ENCODE measurements at regions of chr2 and their contacts with region 1.

Region 1: DNA sequence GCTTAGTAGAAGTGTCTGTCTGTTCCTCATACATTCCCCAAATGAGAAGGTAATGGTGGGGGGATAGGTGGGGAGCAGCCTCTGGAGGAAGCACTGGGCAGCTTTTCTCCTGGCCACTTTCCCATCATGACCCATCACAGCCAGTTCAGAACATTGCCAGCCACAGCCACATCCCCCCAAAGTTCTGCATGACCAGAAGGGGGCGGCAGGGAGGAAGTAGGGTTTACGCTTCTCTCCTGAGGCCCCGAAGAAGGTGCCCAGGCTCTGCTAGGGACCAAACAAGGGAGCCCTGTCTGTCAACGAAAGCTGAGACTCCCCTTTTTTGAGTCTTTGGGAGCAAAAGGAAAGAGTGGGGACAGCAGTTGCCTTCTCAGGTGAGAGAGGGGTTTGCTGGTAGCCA is 7.7 kb downstream of the IGFBP5 start:
- DNase-seq: no peak
- ATAC-seq: no peak
- H3K4me3 ChIP-seq: no peak overlapping the region
- H3K27ac ChIP-seq: no peak overlapping the region
- H3K4me1 ChIP-seq: peaks cover 0 to 4% (median 3%) of the 10 kb centered on the region in 3 donors
- H3K27me3 ChIP-seq: peaks cover 0 to 22% (median 0%) of the 10 kb centered on the region in 4 donors
- CTCF ChIP-seq: peak in 1 of 4 donors; percentile 7

Region 2: GRCh38 chr2:217166241-217166850 is 478.7 kb after region 1 on chr2:
- intact Hi-C with region 1: loop called in 1 of 3 experiments (anchors 10 kb)
- DNase-seq: no peak
- ATAC-seq: peak in 3 of 4 donors; percentile 50 to 63 (median 54)
- H3K4me3 ChIP-seq: no peak overlapping the region
- H3K27ac ChIP-seq: no peak overlapping the region
- H3K4me1 ChIP-seq: no peaks in the 10 kb centered on the region
- H3K27me3 ChIP-seq: no peaks in the 10 kb centered on the region
- CTCF ChIP-seq: peak in 2 of 4 donors; percentile 14 to 16

Region 3: DNA sequence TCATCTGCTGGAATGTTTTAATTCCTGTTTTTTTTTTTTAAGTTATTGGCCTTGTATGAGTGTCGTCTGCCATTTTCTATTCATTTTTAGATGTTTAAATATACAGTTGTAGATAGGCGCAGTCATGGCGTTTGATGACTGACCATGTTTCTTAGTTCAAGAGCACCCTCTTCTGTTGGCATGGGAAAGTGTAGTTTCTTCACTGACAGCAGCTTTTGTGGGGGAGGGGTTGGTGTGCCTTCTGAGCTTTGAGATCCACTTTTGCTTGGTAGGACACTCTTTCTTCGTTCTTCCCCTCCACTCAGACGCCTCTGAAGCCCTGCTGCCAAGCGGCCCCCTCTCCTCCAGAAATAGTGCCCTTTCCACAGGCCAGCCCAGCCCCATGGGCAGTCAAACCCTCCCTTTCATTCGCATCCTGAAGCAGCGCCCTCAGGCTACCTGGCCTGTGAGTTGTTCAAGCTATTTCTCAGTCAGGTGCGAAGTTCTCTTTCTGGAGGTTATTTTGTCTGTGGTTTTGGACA is 823.2 kb after region 1 on chr2:
- intact Hi-C with region 1: loop called in 2 of 3 experiments (anchors 5 to 10 kb)
- DNase-seq: peak in 3 of 6 donors; percentile 29 to 59 (median 38)
- ATAC-seq: peak; percentile 61 to 95 (median 92)
- H3K4me3 ChIP-seq: no peak overlapping the region
- H3K27ac ChIP-seq: no peak overlapping the region
- H3K4me1 ChIP-seq: no peaks in the 10 kb centered on the region
- H3K27me3 ChIP-seq: no peaks in the 10 kb centered on the region
- CTCF ChIP-seq: peak in 3 of 4 donors; percentile 28 to 39 (median 36)

Region 4: GRCh38 chr2:217713395-217714286 is 1026.0 kb after region 1 on chr2:
- intact Hi-C with region 1: loop called in 2 of 3 experiments (anchors 5 to 10 kb)
- DNase-seq: peak; percentile 46 to 90 (median 78)
- ATAC-seq: peak; percentile 90 to 96 (median 95)
- H3K4me3 ChIP-seq: no peak overlapping the region
- H3K27ac ChIP-seq: no peak overlapping the region
- H3K4me1 ChIP-seq: no peaks in the 10 kb centered on the region
- H3K27me3 ChIP-seq: no peaks in the 10 kb centered on the region
- CTCF ChIP-seq: peak; percentile 88 to 95 (median 91)